Activated T-helper 1 cell treated with anti-CD3 and anti-CD28 coated beads, Interleukin-12 subunit alpha, Interleukin-12 subunit beta, Interleukin-2, Interleukin-4 antibody, amounts not matched to agents 30 ng/mL and 10 ng/mL and 1 ng/mL, durations not matched to agents 14 hours and 24 hours and 36 hours (primary cell): ENCODE measurements at regions of chr6 and their contacts with region 1.

Region 1: DNA sequence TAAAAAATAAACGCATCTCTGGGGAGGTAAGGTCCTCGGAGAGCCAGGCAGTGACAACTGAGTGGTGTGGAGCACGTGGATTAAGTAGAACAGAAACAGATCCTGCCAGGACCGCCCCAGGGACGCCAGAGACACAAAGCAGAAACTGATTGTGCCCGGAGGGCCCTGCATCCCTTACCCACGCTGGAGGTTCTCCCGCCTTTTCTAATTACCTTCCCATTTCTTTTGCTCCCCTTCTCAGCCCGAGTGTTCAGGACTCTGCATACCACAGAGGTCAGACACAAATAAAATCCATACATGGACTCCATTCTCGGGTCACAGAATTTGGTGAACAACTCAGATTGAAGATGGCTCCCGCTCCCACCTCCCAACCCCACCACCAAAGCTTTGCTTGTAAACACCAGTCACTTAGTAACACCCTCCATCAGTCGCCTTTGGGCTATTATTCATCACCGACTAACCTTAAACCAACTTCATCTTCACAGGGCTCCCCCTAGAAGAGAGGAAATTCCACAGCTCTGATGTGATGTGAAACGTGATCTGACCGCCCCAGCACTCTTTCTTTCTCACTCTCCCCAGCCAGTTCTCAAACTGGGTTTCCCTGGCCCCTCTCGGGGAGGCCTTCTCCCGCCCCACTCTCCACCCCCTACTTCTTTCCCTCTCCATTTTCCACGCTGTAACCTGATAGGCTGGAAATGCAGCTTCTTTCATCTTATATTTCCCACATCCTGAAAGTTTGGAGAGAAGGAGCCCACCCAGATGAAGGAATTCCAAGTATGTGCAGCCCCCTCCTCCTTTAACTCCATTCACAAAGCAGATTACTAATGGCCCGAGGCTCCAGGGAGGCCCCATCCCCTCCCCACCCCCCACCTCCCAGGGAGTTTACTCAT is 32.5 kb upstream of the PIM1 start:
- DNase-seq: peak; percentile 6
- H3K4me3 Mint-ChIP-seq: peak overlapping the region; percentile 47
- H3K27ac Mint-ChIP-seq: peak overlapping the region; percentile 95
- H3K4me1 Mint-ChIP-seq: peaks cover 51% of the 10 kb centered on the region
- H3K27me3 Mint-ChIP-seq: no peaks in the 10 kb centered on the region

Region 2: DNA sequence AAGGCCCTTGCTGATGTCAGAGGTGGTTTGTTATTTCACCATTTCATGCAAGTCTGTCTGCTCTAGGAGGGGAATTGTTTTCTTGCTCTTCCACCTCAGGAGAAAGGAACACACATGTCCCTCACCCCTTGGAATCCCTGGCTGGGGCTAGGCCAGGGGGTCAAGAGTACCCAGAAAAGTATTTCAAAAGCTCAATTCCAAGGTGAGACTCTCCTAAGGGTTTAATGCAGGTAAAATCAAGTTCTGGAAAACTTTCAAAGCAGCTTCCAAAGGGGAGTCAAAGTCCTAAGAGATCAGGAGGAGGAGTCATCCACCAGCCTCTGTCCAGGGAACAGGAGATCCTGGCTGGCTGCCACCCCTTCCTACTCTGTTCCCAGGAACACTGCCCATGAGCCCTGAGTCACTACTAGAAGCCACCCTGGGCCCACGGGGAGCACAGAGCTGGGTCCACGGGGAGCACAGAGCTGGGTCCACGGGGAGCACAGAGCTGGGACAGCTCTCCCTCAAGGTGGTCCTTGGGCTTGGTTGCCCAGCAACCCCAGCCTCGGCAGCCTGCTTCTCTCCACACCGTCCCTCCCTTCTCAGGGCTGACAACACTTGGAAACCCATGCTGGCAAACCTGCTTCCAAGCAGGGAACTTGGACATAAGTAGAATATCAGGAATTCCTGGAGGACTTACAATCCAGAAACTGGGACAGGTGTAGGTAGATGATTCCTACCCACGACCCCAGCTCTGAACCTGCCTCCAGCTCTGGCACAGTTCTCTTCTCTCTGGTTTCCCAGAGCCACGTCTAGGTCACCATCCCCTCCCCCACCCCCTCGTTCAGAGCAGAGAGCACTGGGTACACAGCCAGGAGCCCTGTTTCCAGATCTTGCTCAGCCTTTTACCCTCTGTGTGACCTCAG is 494.3 kb before region 1 on chr6:
- intact Hi-C with region 1: no loop called
- DNase-seq: no peak
- H3K4me3 Mint-ChIP-seq: no peak overlapping the region
- H3K27ac Mint-ChIP-seq: no peak overlapping the region
- H3K4me1 Mint-ChIP-seq: no peaks in the 10 kb centered on the region
- H3K27me3 Mint-ChIP-seq: peaks cover 19% of the 10 kb centered on the region

Region 3: DNA sequence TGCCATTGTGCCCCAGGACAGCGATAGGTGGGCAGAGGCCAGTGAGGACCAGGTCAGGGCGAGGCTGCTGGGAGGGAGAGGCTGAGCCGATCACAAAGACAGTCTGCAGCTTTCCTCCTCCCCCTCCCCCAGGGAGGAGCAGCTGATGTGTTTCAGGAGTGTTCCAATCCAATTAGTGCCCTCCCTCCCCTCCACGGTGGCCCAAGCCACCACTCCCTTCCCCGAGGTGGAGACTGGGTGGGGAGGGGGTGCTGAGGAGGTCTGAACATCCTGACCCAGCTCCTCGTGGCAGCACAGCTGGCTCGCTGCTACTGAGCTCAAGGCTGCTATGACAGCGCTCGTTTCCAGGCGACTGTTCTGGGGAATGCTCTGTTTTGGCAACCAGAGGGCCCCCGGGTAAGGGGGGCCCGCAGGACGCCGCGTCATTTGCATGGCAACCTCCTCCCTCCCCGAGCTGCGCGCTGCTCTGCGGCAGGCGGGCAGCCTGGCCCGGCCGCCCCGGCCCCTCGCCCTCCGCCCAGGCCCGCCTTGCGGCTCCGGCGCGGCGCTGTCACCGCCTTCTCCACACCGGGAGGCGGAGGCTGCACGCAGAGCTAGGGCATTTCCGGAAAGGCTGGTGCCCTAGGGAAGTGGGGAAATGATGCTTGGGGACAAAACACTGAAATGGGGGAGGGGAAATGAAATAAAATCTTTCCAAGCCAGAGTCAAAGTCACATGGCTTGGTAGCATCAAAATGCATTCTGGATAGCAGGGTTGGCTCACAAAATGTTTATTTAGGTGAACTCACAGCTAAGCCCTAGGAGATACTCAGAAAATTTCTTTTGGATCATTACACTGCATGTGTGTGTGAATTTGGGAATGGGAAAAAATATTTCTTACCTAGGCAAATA is 34.9 kb before region 1 on chr6:
- intact Hi-C with region 1: loop called (anchors 5 kb)
- DNase-seq: peak; percentile 70
- H3K4me3 Mint-ChIP-seq: peak overlapping the region; percentile 56
- H3K27ac Mint-ChIP-seq: peak overlapping the region; percentile 85
- H3K4me1 Mint-ChIP-seq: peaks cover 58% of the 10 kb centered on the region
- H3K27me3 Mint-ChIP-seq: no peaks in the 10 kb centered on the region

Region 4: DNA sequence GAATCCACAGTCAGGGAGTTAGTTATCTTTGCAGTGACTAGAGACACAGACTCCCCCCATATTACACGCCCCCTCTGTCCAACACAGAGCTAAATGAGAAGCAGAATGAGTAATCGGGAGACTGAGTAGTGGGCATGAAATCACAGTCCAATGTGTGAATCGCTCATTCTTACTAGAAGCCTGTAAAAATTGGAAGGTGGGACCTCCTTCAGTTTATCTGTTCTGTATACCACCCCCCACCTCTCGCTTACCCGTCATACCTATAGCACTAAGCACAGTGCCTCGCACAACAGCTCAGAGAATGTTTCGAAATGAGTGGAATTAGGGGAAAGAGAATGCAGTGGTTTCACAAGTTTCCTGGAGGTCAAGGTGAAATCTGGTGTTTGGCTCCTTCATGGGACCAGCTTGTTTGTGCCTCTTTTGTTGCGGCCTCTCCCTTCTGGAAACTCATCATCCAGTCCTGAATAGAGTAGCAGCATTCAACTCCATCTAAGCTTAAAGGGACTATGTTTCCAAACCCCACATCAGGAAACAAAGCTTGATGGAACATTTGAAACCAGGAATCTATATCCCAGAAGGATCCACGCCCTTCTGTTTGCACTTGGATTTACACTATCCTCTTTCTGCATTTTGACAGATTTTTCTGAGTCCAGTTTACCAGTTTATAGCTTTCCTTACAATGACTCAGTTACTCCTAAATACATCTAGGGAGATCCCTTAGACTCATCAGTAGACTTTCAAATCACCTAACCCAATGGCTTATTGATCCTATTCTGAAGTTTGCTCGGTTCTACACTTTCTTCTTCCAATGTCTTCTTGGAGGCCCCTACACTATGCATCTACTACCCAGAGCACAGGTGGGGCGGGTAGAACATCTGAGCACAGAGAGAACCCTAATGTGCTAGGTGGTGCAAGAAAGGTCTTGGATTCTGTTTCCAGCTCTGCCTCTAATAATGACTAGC is 26.7 kb before region 1 on chr6:
- intact Hi-C with region 1: loop called (anchors 1 kb)
- DNase-seq: peak; percentile 34
- H3K4me3 Mint-ChIP-seq: peak overlapping the region; percentile 48
- H3K27ac Mint-ChIP-seq: peak overlapping the region; percentile 82
- H3K4me1 Mint-ChIP-seq: peaks cover 38% of the 10 kb centered on the region
- H3K27me3 Mint-ChIP-seq: no peaks in the 10 kb centered on the region

Region 5: GRCh38 chr6:37155394-37156312 is 18.2 kb after region 1 on chr6:
- intact Hi-C with region 1: loop called (anchors 1 kb)
- DNase-seq: peak; percentile 52
- H3K4me3 Mint-ChIP-seq: peak overlapping the region; percentile 24
- H3K27ac Mint-ChIP-seq: peak overlapping the region; percentile 81
- H3K4me1 Mint-ChIP-seq: peaks cover 30% of the 10 kb centered on the region
- H3K27me3 Mint-ChIP-seq: no peaks in the 10 kb centered on the region

Region 6: GRCh38 chr6:37279366-37280134 is 142.1 kb after region 1 on chr6:
- intact Hi-C with region 1: no loop called
- DNase-seq: no peak
- H3K4me3 Mint-ChIP-seq: no peak overlapping the region
- H3K27ac Mint-ChIP-seq: peak overlapping the region; percentile 70
- H3K4me1 Mint-ChIP-seq: peaks cover 82% of the 10 kb centered on the region
- H3K27me3 Mint-ChIP-seq: no peaks in the 10 kb centered on the region